Natural killer cell (primary cell): ENCODE measurements at regions of chr2 and their contacts with region 1.

Region 1: DNA sequence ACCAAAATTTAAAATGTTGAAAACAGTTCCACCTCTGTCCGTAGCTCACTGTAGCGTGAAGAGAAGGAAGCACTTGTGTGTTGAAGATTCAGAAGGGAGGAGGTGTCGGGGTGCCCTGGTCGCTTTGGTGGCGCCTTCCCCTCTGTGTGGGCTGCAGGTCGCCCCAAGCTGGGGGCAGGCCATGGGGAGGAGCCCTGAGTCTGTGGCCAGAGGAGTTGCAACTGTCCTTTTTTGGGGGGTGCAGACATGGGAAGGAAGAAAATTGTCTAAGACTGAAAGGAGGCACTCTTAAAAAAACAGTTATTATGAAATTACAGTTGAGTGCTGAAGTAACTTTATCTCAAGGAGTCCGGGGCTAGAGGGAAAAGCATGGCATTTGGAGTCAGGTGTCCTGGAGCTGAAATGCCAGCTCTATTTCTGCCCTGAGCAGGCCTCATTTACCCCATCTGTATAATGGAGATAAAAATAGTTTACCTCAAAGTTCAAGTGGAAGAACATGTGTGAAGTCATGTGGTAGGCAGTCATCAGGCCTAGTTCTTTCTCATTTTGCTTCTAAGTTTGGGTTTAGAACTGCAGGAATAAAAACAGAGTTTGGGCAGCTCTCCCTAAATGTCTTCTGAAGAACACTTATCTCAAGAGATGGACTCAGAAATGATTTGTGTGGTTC is 82.1 kb downstream of the RNF144A start:
- DNase-seq: no peak
- ATAC-seq: peak; percentile 81 to 92 (median 87)
- H3K4me3 ChIP-seq: no peak overlapping the region
- H3K4me3 Mint-ChIP-seq: peak overlapping the region; percentile 86
- H3K27ac ChIP-seq: peak overlapping the region; percentile 24
- H3K27ac Mint-ChIP-seq: peak overlapping the region; percentile 86 to 92
- H3K4me1 ChIP-seq: peaks cover 22% of the 10 kb centered on the region
- H3K4me1 Mint-ChIP-seq: peaks cover 23 to 43% of the 10 kb centered on the region in 2 donors
- H3K27me3 ChIP-seq: no peaks in the 10 kb centered on the region
- H3K27me3 Mint-ChIP-seq: no peaks in the 10 kb centered on the region
- CTCF ChIP-seq: no peak

Region 2: GRCh38 chr2:6325616-6326015 is 673.7 kb before region 1 on chr2:
- intact Hi-C with region 1: no loop called
- DNase-seq: no peak
- ATAC-seq: no peak
- H3K4me3 ChIP-seq: no peak overlapping the region
- H3K4me3 Mint-ChIP-seq: no peak overlapping the region
- H3K27ac ChIP-seq: no peak overlapping the region
- H3K27ac Mint-ChIP-seq: no peak overlapping the region
- H3K4me1 ChIP-seq: no peaks in the 10 kb centered on the region
- H3K4me1 Mint-ChIP-seq: no peaks in the 10 kb centered on the region
- H3K27me3 ChIP-seq: no peaks in the 10 kb centered on the region
- H3K27me3 Mint-ChIP-seq: no peaks in the 10 kb centered on the region
- CTCF ChIP-seq: no peak

Region 3: DNA sequence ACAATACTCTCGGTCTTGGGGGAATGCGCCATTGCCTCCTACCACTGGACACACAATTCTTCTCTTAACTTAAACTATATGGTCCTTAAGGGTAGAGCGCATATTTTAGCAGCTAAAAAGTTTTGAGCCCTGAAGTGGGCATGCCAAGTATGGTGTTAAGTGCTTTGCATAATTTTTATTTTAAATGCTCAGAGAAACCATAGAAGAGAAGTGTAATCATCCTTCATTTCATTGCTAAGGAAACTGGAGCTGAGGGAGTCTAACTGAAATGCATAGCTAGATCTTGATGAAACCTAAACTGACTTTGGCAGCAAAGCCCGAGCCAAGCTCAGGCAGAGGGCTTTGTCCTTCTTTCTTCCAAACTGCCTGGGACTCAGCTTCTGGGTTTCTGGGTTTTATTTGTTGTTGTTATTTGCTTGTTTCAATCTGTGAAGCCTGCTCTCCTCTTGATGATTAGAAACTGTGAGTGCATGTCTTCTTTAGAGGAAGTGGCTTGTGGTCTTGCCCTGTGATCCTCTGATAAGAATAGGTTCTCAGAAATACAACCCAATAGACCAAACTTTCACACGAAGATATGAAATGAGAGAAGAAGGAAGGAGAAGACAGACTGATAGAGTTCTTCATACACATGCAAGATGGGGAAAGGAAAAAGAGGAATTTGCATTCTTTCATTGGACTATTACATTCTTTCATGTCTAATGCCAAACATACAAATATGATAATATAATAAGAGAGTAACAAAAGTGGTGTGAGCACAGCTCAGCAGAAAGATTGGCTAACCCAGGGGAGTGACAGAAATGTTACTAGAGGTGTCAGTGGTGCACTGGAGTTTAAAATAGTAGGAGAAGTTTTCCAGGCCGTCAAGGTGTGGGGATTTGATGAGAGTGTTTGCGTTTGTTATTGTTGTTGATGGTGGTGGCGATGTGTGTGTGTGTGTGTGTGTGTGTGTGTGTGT is 89.6 kb before region 1 on chr2:
- intact Hi-C with region 1: loop called (anchors 5 kb)
- DNase-seq: peak in 1 of 2 donors; percentile 83
- ATAC-seq: peak; percentile 83 to 94 (median 88)
- H3K4me3 ChIP-seq: peak overlapping the region; percentile 4
- H3K4me3 Mint-ChIP-seq: peak overlapping the region; percentile 85
- H3K27ac ChIP-seq: peak overlapping the region; percentile 75
- H3K27ac Mint-ChIP-seq: peak overlapping the region; percentile 81 to 83
- H3K4me1 ChIP-seq: peaks cover 47% of the 10 kb centered on the region
- H3K4me1 Mint-ChIP-seq: peaks cover 71 to 81% of the 10 kb centered on the region in 2 donors
- H3K27me3 ChIP-seq: no peaks in the 10 kb centered on the region
- H3K27me3 Mint-ChIP-seq: peaks cover 4 to 7% of the 10 kb centered on the region in 2 donors
- CTCF ChIP-seq: no peak

Region 4: GRCh38 chr2:7180638-7181370 is 181.5 kb after region 1 on chr2:
- intact Hi-C with region 1: no loop called
- DNase-seq: no peak
- ATAC-seq: no peak
- H3K4me3 ChIP-seq: no peak overlapping the region
- H3K4me3 Mint-ChIP-seq: no peak overlapping the region
- H3K27ac ChIP-seq: no peak overlapping the region
- H3K27ac Mint-ChIP-seq: no peak overlapping the region
- H3K4me1 ChIP-seq: no peaks in the 10 kb centered on the region
- H3K4me1 Mint-ChIP-seq: no peaks in the 10 kb centered on the region
- H3K27me3 ChIP-seq: no peaks in the 10 kb centered on the region
- H3K27me3 Mint-ChIP-seq: peaks cover 0 to 11% of the 10 kb centered on the region in 2 donors
- CTCF ChIP-seq: no peak